Activated CD8-positive, alpha-beta T cell treated with anti-CD3 and anti-CD28 coated beads, Interleukin-2, amount 10 ng/mL, durations not matched to agents 7 days and 5 days (primary cell): ENCODE measurements at regions of chr7 and their contacts with region 1.

Region 1: DNA sequence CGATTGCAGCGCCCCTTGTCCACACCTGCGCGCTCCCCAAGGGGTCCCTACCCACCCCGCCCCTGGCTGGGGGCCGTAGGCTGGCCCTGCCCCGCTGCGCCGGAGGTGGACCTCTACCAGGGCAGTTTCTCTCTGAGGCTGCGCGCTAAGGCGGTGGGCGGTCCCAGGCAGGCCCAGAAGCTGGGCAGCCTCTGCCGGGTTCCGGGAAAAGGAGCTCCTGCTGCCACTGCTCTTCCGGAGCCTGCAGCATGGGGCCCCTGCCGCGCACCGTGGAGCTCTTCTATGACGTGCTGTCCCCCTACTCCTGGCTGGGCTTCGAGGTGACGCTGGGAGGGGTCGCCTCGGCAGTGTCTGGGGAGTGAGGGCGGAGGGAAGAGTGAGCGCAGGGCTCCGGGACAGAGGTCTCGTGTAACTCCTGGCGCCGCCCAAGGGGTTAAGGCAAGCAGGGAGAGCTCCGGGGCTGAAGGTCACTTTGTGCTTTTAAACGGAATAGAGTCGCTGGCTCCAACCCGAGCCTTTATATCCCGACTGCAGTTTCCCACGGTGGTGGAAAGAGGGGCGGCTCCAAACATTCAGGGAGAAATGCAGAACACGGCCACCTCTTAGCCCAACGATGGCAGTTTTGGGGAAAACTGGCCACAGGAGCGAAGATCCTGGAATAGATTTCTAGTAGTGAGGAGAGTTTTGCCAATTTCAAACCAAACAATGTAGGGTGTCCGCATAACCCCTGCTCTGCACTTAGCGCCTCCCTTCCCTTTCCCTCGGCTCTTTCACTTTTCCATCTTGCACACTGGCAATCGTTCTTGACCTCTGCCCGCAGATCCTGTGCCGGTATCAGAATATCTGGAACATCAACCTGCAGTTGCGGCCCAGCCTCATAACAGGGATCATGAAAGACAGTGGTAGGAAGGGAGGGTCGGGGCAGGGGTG is at the start of gene GSTK1:
- DNase-seq: peak; percentile 84
- ATAC-seq: peak; percentile 99
- H3K4me3 Mint-ChIP-seq: peak within 1 kb of the TSS; percentile 97
- H3K27ac Mint-ChIP-seq: peak within 1 kb of the TSS; percentile 93
- H3K4me1 Mint-ChIP-seq: peaks cover 53% of the 10 kb centered on the region
- H3K27me3 Mint-ChIP-seq: no peaks in the 10 kb centered on the region
- total RNA-seq, gene GSTK1: 254 to 255 TPM

Region 2: DNA sequence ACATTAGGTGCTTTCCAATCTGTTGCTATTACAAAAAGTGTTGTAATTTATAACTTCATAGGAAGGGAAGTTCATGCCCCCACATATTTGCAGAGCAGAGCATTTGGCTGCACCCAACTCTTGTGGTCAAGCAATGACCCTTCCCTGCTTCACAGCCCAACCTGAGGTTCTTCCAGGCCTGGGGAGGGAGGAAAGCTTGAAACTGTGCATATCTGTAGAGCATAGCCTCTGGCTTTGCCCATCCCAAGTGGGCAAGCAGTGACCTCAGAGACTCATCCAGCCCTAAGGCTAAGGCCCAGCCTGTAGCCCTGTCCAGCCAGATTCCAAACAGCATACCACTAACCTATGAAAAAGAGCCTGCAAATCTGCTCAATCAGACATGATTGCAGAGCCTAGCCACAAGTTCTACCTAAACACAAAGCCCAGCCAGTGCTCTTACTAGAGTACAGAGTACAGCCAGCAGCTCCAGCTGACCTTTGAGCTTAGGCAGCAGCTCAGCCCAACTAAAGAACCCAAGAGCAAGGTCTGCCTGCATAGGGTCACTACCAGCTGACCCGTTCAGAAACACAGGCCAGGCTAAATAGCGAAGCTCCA is 14.7 kb before region 1 on chr7:
- CTCF ChIA-PET with region 1: interaction called, 224 read pairs
- POLR2A ChIA-PET with region 1: interaction called, 20 read pairs
- DNase-seq: no peak
- ATAC-seq: no peak
- H3K4me3 Mint-ChIP-seq: no peak overlapping the region
- H3K27ac Mint-ChIP-seq: peak overlapping the region; percentile 31
- H3K4me1 Mint-ChIP-seq: peaks cover 83% of the 10 kb centered on the region
- H3K27me3 Mint-ChIP-seq: no peaks in the 10 kb centered on the region

Region 3: GRCh38 chr7:143279186-143280098 is 15.9 kb after region 1 on chr7:
- CTCF ChIA-PET with region 1: interaction called, 36 read pairs
- POLR2A ChIA-PET with region 1: interaction called, 34 read pairs
- DNase-seq: no peak
- ATAC-seq: peak; percentile 78
- H3K4me3 Mint-ChIP-seq: peak overlapping the region; percentile 61
- H3K27ac Mint-ChIP-seq: peak overlapping the region; percentile 75
- H3K4me1 Mint-ChIP-seq: peaks cover 42% of the 10 kb centered on the region
- H3K27me3 Mint-ChIP-seq: no peaks in the 10 kb centered on the region

Region 4: DNA sequence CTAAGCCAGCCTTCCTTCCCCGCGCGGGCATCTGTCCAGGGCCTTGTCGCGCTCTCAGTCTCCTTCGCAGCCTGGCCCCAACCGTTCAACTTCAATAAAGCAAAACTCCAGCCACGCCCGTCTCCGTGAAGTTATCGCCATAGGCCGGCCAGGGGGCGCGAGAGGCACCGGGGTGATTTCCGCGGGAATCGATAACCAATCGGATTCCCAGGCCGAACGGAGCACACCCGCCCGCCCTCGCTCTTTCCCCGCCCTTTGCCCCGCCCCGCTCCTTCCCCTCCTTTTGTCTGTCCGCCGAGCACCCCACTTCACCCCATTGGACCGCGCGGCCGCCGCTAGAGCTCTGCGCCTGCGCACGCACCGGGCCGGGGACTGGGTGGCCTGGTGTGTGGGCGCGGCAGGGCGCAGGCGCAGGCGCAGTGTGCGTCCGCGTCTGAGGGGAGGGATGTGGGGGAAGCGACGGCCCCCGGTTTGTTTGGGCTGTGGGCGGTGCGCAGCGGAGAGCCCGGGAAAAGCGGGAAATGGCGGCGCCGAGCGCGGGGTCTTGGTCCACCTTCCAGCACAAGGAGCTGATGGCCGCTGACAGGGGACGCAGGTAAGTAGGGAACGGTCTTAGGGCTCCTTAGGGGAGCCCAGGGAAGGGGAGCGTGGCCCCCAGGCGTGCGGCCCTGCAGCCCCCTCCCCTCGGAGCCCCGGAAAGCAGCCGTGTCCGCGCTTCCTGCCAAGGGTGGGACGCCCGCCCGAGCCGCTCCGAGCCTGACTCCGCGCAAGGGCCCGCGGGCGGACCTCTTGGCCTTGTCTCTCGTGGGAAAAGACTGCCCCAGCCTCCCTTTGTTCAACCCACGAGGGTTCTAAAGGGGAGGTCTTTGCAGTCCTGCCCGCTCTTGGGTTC is 24.6 kb after region 1 on chr7 and contains the start of gene CASP2:
- CTCF ChIA-PET with region 1: interaction called, 13 read pairs
- POLR2A ChIA-PET with region 1: interaction called, 17 read pairs
- DNase-seq: peak; percentile 99
- ATAC-seq: peak; percentile 97
- H3K4me3 Mint-ChIP-seq: peak within 1 kb of the TSS; percentile 93
- H3K27ac Mint-ChIP-seq: peak within 1 kb of the TSS; percentile 94
- H3K4me1 Mint-ChIP-seq: peaks cover 55% of the 10 kb centered on the region
- H3K27me3 Mint-ChIP-seq: no peaks in the 10 kb centered on the region
- total RNA-seq, gene CASP2: 111 to 115 TPM

Region 5: GRCh38 chr7:143299840-143300239 is 36.3 kb after region 1 on chr7:
- CTCF ChIA-PET with region 1: interaction called, 19 read pairs
- POLR2A ChIA-PET with region 1: interaction called, 11 read pairs
- DNase-seq: peak; percentile 71
- ATAC-seq: peak; percentile 87
- H3K4me3 Mint-ChIP-seq: no peak overlapping the region
- H3K27ac Mint-ChIP-seq: no peak overlapping the region
- H3K4me1 Mint-ChIP-seq: peaks cover 52% of the 10 kb centered on the region
- H3K27me3 Mint-ChIP-seq: no peaks in the 10 kb centered on the region

Region 6: GRCh38 chr7:143321734-143322133 is 58.2 kb after region 1 on chr7:
- CTCF ChIA-PET with region 1: no interaction called
- POLR2A ChIA-PET with region 1: no interaction called
- DNase-seq: no peak
- ATAC-seq: no peak
- H3K4me3 Mint-ChIP-seq: no peak overlapping the region
- H3K27ac Mint-ChIP-seq: peak overlapping the region; percentile 11
- H3K4me1 Mint-ChIP-seq: peaks cover 13% of the 10 kb centered on the region
- H3K27me3 Mint-ChIP-seq: peaks cover 5% of the 10 kb centered on the region